Activated CD4-positive, alpha-beta T cell treated with anti-CD3 and anti-CD28 coated beads for 36 hours (primary cell): ENCODE measurements at regions of chrX and their contacts with region 1.

Region 1: GRCh38 chrX:38811515-38812243 is 10.4 kb downstream of the MID1IP1 start:
- DNase-seq: peak; percentile 25
- ATAC-seq: peak; percentile 67
- H3K4me3 Mint-ChIP-seq: peak overlapping the region; percentile 6
- H3K27ac Mint-ChIP-seq: peak overlapping the region; percentile 91
- H3K4me1 Mint-ChIP-seq: peaks cover 63% of the 10 kb centered on the region
- H3K27me3 Mint-ChIP-seq: no peaks in the 10 kb centered on the region

Region 2: GRCh38 chrX:38754102-38754790 is 57.4 kb before region 1 on chrX:
- CTCF ChIA-PET with region 1: no interaction called
- POLR2A ChIA-PET with region 1: no interaction called
- intact Hi-C with region 1: no loop called
- DNase-seq: peak; percentile 41
- ATAC-seq: no peak
- H3K4me3 Mint-ChIP-seq: no peak overlapping the region
- H3K27ac Mint-ChIP-seq: no peak overlapping the region
- H3K4me1 Mint-ChIP-seq: no peaks in the 10 kb centered on the region
- H3K27me3 Mint-ChIP-seq: no peaks in the 10 kb centered on the region

Region 3: DNA sequence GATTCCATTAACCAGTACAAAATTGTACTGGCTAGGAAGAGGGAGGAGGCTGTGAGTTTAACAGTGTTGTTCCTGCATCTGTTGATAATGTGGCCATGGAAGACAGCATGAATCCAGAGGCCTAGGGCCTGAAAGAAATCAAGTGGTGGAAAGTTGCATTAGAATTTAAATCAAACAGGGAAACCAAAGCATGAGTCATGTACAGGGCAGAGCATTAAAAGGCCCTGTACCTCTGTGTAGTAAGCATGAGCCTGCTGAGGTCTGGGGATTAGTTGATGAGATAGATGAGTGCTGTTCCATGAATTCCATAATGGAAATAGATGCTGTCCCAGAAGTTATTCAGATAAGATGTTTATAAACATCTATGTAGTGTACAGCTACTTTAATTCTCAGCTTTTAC is 47.9 kb after region 1 on chrX:
- CTCF ChIA-PET with region 1: no interaction called
- POLR2A ChIA-PET with region 1: no interaction called
- intact Hi-C with region 1: loop called in 1 of 2 experiments (anchors 5 kb)
- DNase-seq: no peak
- ATAC-seq: peak; percentile 63
- H3K4me3 Mint-ChIP-seq: no peak overlapping the region
- H3K27ac Mint-ChIP-seq: no peak overlapping the region
- H3K4me1 Mint-ChIP-seq: peaks cover 6% of the 10 kb centered on the region
- H3K27me3 Mint-ChIP-seq: no peaks in the 10 kb centered on the region

Region 4: GRCh38 chrX:38870361-38870895 is 58.7 kb after region 1 on chrX:
- CTCF ChIA-PET with region 1: no interaction called
- POLR2A ChIA-PET with region 1: no interaction called
- intact Hi-C with region 1: no loop called
- DNase-seq: no peak
- ATAC-seq: no peak
- H3K4me3 Mint-ChIP-seq: no peak overlapping the region
- H3K27ac Mint-ChIP-seq: no peak overlapping the region
- H3K4me1 Mint-ChIP-seq: no peaks in the 10 kb centered on the region
- H3K27me3 Mint-ChIP-seq: no peaks in the 10 kb centered on the region